Psoas muscle (tissue), 8 donors: ENCODE measurements at regions of chr14 and their contacts with region 1.

Region 1: GRCh38 chr14:68137704-68138619 is 318.4 kb downstream of the RAD51B start:
- DNase-seq: peak; percentile 60 to 69
- ATAC-seq: peak; percentile 85 to 95 (median 90)
- H3K4me3 ChIP-seq: no peak overlapping the region
- H3K27ac ChIP-seq: peak overlapping the region; percentile 81
- H3K4me1 ChIP-seq: peaks cover 50% of the 10 kb centered on the region
- H3K27me3 ChIP-seq: no peaks in the 10 kb centered on the region
- CTCF ChIP-seq: no peak

Region 2: GRCh38 chr14:67863234-67863633 is 274.7 kb before region 1 on chr14:
- intact Hi-C with region 1: no loop called
- DNase-seq: no peak
- ATAC-seq: no peak
- H3K4me3 ChIP-seq: no peak overlapping the region
- H3K27ac ChIP-seq: no peak overlapping the region
- H3K4me1 ChIP-seq: no peaks in the 10 kb centered on the region
- H3K27me3 ChIP-seq: no peaks in the 10 kb centered on the region
- CTCF ChIP-seq: no peak

Region 3: DNA sequence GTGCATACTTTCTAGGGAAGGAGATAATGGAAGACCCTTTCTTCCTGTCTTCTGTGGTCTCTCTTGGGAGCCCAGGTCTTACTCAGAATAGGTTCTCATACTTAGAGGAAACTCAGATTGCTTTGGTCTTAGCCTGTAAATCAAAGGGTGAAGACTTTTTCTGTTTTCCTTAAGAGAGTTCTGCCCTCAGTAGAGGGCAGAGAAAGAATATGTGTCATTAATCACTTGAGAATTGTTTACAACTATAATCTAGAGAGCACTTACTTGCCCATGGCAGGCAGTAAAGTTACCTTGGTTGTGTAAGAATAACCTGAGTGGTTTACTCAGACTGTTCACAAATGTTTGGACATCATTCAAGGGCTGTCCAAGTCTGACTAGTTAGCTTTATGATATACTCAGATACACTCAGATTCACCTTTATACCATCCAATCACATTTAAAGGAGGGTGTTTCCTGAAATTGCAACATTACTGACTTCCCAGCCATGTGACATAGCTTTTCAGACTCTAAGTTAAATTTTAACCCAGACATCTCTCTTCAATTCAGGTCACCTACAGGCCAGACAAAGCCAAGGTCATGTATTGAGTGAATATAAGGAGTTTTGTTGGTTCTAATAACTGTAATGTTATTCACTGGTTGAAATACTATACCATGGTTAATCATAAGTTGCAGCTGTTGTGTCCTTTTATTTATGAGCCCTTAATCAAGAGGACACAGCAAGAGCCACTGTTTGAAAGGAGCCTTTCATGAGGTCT is 53.8 kb after region 1 on chr14:
- intact Hi-C with region 1: loop called in 1 of 2 experiments (anchors 2 kb)
- DNase-seq: no peak
- ATAC-seq: peak; percentile 85 to 94 (median 94)
- H3K4me3 ChIP-seq: no peak overlapping the region
- H3K27ac ChIP-seq: peak overlapping the region; percentile 84
- H3K4me1 ChIP-seq: peaks cover 44% of the 10 kb centered on the region
- H3K27me3 ChIP-seq: no peaks in the 10 kb centered on the region
- CTCF ChIP-seq: no peak

Region 4: GRCh38 chr14:68409387-68409786 is 271.4 kb after region 1 on chr14:
- intact Hi-C with region 1: no loop called
- DNase-seq: no peak
- ATAC-seq: no peak
- H3K4me3 ChIP-seq: no peak overlapping the region
- H3K27ac ChIP-seq: no peak overlapping the region
- H3K4me1 ChIP-seq: peaks cover 1% of the 10 kb centered on the region
- H3K27me3 ChIP-seq: no peaks in the 10 kb centered on the region
- CTCF ChIP-seq: no peak

Region 5: GRCh38 chr14:68795597-68796417 is 657.8 kb after region 1 on chr14:
- intact Hi-C with region 1: loop called in 1 of 2 experiments (anchors 5 kb)
- DNase-seq: peak; percentile 85 to 93
- ATAC-seq: peak; percentile 59 to 64 (median 62)
- H3K4me3 ChIP-seq: peak overlapping the region; percentile 91
- H3K27ac ChIP-seq: peak overlapping the region; percentile 100
- H3K4me1 ChIP-seq: no peaks in the 10 kb centered on the region
- H3K27me3 ChIP-seq: no peaks in the 10 kb centered on the region
- CTCF ChIP-seq: peak; percentile 80